ENCODE measurements at regions of chr15 and their contacts with region 1.

Region 1: GRCh38 chr15:78120523-78120922 is 10.7 kb downstream of the CIB2 start:
- DNase-seq: no peak
- H3K4me3 ChIP-seq: no peak overlapping the region
- H3K27ac ChIP-seq: no peak overlapping the region
- H3K4me1 ChIP-seq: no peaks in the 10 kb centered on the region
- H3K27me3 ChIP-seq: no peaks in the 10 kb centered on the region
- CTCF ChIP-seq: no peak

Region 2: GRCh38 chr15:78065284-78065872 is 55.1 kb before region 1 on chr15:
- CTCF ChIA-PET with region 1: no interaction called
- POLR2A ChIA-PET with region 1: no interaction called
- intact Hi-C with region 1: no loop called
- DNase-seq: peak; percentile 74 to 92
- H3K4me3 ChIP-seq: no peak overlapping the region
- H3K27ac ChIP-seq: peak overlapping the region; percentile 66
- H3K4me1 ChIP-seq: peaks cover 48% of the 10 kb centered on the region
- H3K27me3 ChIP-seq: no peaks in the 10 kb centered on the region
- CTCF ChIP-seq: no peak

Region 3: GRCh38 chr15:78299101-78299930 is 178.8 kb after region 1 on chr15 and contains the start of gene SKIC8:
- CTCF ChIA-PET with region 1: no interaction called
- POLR2A ChIA-PET with region 1: interaction called, 12 read pairs
- intact Hi-C with region 1: no loop called
- DNase-seq: peak; percentile 87 to 93
- H3K4me3 ChIP-seq: peak within 1 kb of the TSS; percentile 72
- H3K27ac ChIP-seq: peak within 1 kb of the TSS; percentile 92
- H3K4me1 ChIP-seq: peaks cover 54% of the 10 kb centered on the region
- H3K27me3 ChIP-seq: no peaks in the 10 kb centered on the region
- CTCF ChIP-seq: no peak
- total RNA-seq, gene SKIC8: 44.5 and 47.7 TPM in 2 replicates